ENCODE measurements at regions of chr13 and their contacts with region 1.

Region 1: DNA sequence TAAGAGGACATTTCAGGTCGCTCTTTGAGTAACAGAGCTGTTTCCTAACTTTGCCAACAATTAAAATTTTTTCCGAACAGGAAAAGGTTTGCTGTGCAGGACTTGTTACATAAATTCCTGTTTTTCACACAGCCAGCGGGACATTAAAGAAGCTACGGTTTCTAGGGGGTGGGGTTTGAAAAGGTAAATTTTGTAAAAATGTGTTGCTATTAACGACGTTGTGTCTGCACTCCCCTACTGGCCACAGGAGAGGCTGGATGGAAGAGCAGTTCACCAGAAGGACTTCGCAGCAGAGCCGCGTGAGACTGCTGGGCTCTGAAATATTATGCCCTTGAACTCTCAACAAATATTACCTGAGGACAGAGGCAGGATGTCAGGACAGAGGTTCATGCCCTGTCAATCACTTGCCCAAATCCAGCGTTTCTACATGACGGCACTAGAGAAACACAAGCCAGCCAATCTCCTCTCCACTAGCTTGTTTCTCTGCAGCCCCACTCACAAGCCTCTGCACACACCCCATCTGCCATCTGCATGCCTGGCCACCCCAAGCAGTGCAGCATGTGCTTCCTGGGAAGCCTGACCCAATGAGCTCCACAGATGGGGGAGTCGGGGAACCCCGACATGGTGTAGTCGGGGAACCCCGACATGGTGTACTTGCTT is 102.0 kb downstream of the FOXO1 start:
- DNase-seq: peak; percentile 96
- ATAC-seq: peak; percentile 78
- H3K4me3 ChIP-seq: peak overlapping the region; percentile 35 to 69 (median 44)
- H3K27ac ChIP-seq: peak overlapping the region; percentile 94
- H3K4me1 ChIP-seq: peaks cover 83% of the 10 kb centered on the region
- H3K27me3 ChIP-seq: no peaks in the 10 kb centered on the region
- CTCF ChIP-seq: peak; percentile 57
- EP300 ChIP-seq: peak in 1 of 2 experiments; percentile 75; a peak in 3 of 4 replicates
- POLR2A ChIP-seq: peak; percentile 40 to 59; a peak in 3 of 4 replicates
- RAD21 ChIP-seq: peak; percentile 54; the same call in 1 of the 2 replicates

Region 2: GRCh38 chr13:40069173-40070044 is 495.1 kb before region 1 on chr13:
- CTCF ChIA-PET with region 1: no interaction called
- POLR2A ChIA-PET with region 1: interaction called, 5 read pairs
- in situ Hi-C with region 1: no loop called
- intact Hi-C with region 1: loop called (anchors 2 kb)
- DNase-seq: peak; percentile 67
- ATAC-seq: peak; percentile 75
- H3K4me3 ChIP-seq: no peak overlapping the region
- H3K27ac ChIP-seq: no peak overlapping the region
- H3K4me1 ChIP-seq: peaks cover 69% of the 10 kb centered on the region
- H3K27me3 ChIP-seq: no peaks in the 10 kb centered on the region
- CTCF ChIP-seq: peak; percentile 85
- EP300 ChIP-seq: no peak
- POLR2A ChIP-seq: no peak
- RAD21 ChIP-seq: peak; percentile 60; the same call in 1 of the 2 replicates

Region 3: DNA sequence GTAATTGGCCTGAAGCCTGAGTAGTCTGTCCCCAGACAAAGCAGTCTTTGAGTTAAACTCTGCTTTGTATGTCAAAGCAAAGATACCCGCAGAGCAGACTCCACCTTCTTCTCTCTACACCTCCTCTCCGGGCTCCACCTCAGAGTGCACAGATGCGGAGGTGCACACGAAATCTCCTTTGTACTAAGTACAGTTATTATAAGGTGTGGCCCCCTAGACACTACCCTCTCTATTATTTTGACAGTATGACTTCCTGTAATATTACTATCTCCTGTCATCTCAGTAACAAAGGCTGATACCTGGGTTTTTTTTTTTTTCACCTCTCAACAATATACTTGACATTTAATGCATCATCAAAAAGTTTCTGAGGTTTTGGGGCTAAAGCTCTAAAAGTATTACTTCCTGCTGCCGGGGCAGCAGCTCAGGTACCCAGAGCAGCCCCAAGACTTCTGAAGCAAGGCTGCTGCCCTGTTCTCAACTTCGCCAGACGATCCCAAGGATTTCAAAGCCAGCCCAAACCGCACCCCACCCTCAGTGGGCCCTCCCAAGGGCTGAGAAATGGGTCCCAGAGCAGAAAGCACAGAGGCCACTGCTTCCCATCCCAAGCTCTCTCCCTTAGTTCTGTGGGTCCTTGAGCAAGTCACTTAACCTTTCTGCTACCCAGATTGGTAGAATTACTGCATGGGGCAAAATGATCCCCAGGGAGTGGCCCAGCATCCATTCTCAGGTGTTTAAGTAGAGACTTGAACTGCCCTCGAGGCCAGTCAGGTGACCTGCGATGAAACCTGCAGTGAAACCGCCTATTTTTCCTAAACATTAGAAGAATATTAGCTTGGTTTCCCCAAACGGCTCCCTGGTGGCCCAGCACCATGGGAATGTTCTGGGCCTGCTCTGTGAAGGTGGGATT is 78.6 kb before region 1 on chr13:
- CTCF ChIA-PET with region 1: no interaction called
- POLR2A ChIA-PET with region 1: no interaction called
- in situ Hi-C with region 1: no loop called
- intact Hi-C with region 1: loop called (anchors 2 kb)
- DNase-seq: no peak
- ATAC-seq: no peak
- H3K4me3 ChIP-seq: no peak overlapping the region
- H3K27ac ChIP-seq: no peak overlapping the region
- H3K4me1 ChIP-seq: peaks cover 54% of the 10 kb centered on the region
- H3K27me3 ChIP-seq: no peaks in the 10 kb centered on the region
- CTCF ChIP-seq: no peak
- EP300 ChIP-seq: no peak
- POLR2A ChIP-seq: no peak
- RAD21 ChIP-seq: no peak

Region 4: DNA sequence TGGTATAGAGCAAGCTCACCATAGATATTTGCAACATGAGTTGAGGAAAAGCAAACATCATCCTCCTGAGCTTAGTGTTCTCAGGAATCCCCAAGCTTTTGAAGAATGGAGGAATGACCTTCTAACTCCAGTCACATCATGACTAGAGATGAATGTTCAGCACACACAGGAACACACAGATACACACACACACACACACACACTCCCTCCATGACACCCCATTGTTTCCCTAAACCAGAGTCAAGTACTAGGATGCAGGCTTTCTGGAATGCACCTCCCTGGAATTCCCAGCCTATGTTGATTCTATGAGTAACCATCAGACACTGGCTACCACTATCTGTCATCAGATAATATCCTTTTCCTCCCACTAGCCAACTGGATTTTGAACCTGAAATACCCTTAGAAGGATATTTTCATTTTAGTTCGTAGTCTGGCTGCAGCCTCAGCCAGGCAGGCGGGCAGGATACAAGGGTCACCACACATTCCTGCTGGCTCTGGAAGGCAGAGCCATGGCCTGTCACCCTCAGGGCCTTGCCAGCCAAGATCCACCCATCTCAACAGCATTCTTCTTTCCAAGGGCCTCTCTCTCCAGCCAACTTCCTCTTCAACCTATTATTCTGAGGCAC is 60.4 kb before region 1 on chr13:
- CTCF ChIA-PET with region 1: no interaction called
- POLR2A ChIA-PET with region 1: interaction called, 5 read pairs
- in situ Hi-C with region 1: no loop called
- intact Hi-C with region 1: loop called (anchors 1 kb)
- DNase-seq: peak; percentile 99
- ATAC-seq: peak; percentile 96
- H3K4me3 ChIP-seq: peak overlapping the region in 1 of 3 experiments; percentile 45; a peak in 2 of 6 replicates
- H3K27ac ChIP-seq: peak overlapping the region; percentile 77
- H3K4me1 ChIP-seq: peaks cover 34% of the 10 kb centered on the region
- H3K27me3 ChIP-seq: no peaks in the 10 kb centered on the region
- CTCF ChIP-seq: no peak
- EP300 ChIP-seq: peak; percentile 74 to 79; a peak in 3 of 4 replicates
- POLR2A ChIP-seq: peak in 1 of 2 experiments; percentile 64; a peak in 1 of 4 replicates
- RAD21 ChIP-seq: peak; percentile 31; the same call in 1 of the 2 replicates

Region 5: DNA sequence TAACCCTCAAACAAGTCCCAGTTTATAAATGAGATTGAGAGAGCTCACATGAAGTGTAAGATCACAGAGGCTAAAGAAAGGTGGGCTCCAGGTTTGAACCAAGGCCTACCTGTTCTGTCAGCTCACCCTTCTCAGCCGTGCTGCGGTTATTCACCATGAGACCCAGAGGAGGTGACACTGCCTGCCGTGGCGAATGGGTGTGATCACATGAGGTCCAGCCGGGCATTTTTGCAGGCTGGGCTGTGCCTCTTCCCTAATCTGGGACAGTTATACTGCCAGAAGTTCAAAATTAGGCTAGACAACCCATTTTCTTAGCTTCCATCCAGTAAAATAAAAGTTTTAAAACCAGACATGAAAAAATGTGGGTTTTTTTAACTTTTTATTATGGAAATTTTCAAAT is 44.8 kb before region 1 on chr13:
- CTCF ChIA-PET with region 1: no interaction called
- POLR2A ChIA-PET with region 1: no interaction called
- in situ Hi-C with region 1: no loop called
- intact Hi-C with region 1: no loop called
- DNase-seq: no peak
- ATAC-seq: no peak
- H3K4me3 ChIP-seq: no peak overlapping the region
- H3K27ac ChIP-seq: no peak overlapping the region
- H3K4me1 ChIP-seq: peaks cover 31% of the 10 kb centered on the region
- H3K27me3 ChIP-seq: no peaks in the 10 kb centered on the region
- CTCF ChIP-seq: no peak
- EP300 ChIP-seq: no peak
- POLR2A ChIP-seq: no peak
- RAD21 ChIP-seq: no peak

Region 6: DNA sequence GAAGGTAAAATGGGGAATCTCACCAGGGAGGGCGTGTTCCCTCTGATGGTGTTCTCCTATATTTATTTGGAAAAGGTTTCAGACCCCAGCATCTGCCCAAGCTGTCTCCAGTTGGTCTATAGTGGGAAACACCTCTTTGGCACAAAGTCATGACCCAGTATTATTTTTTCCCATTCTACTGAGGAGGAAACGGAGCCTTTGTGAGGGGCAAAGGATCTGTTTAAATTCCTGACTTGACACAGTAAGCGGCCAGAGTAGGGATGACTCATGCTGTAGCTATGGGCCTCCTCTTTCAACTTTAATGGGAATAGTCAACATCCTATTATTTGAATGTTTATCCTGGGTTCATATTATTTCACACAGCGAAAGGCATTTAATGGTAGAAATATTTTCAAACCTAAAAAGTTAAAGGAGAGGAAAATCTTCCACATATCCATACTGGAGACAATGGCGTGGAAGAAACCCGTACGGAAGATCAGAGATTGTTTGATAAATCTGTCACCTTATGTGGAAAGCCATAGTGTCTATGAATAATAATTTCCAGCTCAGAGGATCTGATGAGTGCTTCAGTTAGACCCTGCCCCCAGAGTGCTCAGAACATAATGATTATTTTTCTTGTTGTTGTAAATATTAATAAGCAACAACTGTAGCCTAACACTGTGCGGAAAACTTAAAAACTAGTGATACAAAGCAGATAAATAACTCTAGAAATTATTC is 24.0 kb before region 1 on chr13:
- CTCF ChIA-PET with region 1: interaction called, 3 read pairs
- POLR2A ChIA-PET with region 1: interaction called, 17 read pairs
- in situ Hi-C with region 1: no loop called
- intact Hi-C with region 1: loop called (anchors 1 kb)
- DNase-seq: peak; percentile 96
- ATAC-seq: peak; percentile 83
- H3K4me3 ChIP-seq: peak overlapping the region in 2 of 3 experiments; percentile 35 to 47; a peak in 2 of 6 replicates
- H3K27ac ChIP-seq: peak overlapping the region; percentile 76
- H3K4me1 ChIP-seq: peaks cover 68% of the 10 kb centered on the region
- H3K27me3 ChIP-seq: no peaks in the 10 kb centered on the region
- CTCF ChIP-seq: no peak
- EP300 ChIP-seq: peak; percentile 61 to 90; a peak in 3 of 4 replicates
- POLR2A ChIP-seq: no peak
- RAD21 ChIP-seq: no peak

Region 7: GRCh38 chr13:40549500-40550094 is 14.9 kb before region 1 on chr13:
- CTCF ChIA-PET with region 1: no interaction called
- POLR2A ChIA-PET with region 1: interaction called, 10 read pairs
- in situ Hi-C with region 1: no loop called
- intact Hi-C with region 1: no loop called
- DNase-seq: peak; percentile 77
- ATAC-seq: peak; percentile 52
- H3K4me3 ChIP-seq: peak overlapping the region in 1 of 3 experiments; percentile 13; a peak in 1 of 6 replicates
- H3K27ac ChIP-seq: peak overlapping the region; percentile 32
- H3K4me1 ChIP-seq: peaks cover 89% of the 10 kb centered on the region
- H3K27me3 ChIP-seq: no peaks in the 10 kb centered on the region
- CTCF ChIP-seq: no peak
- EP300 ChIP-seq: no peak; a peak in 1 of 4 replicates
- POLR2A ChIP-seq: no peak
- RAD21 ChIP-seq: no peak

Region 8: DNA sequence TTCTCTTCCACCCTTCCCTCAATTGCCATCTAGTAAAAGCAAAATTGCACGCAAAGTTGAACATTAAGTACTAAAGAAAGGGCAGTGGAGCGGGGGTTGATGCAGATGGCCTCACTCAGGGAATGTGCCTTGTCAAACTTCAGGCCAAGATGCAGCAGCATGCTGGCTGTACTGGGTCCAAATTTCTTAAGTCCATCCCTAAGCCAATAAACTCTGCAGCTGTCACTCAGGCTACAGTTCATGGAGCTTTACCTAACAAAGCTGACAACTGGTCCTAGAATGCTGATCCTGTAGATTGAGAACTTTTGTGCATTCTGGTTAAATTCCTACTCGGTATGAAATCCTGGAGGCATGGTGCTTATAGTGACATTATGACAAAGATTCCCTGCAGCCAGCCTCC is 13.6 kb after region 1 on chr13:
- CTCF ChIA-PET with region 1: no interaction called
- POLR2A ChIA-PET with region 1: no interaction called
- in situ Hi-C with region 1: no loop called
- intact Hi-C with region 1: loop called (anchors 2 kb)
- DNase-seq: no peak
- ATAC-seq: peak; percentile 52
- H3K4me3 ChIP-seq: no peak overlapping the region
- H3K27ac ChIP-seq: no peak overlapping the region
- H3K4me1 ChIP-seq: peaks cover 82% of the 10 kb centered on the region
- H3K27me3 ChIP-seq: no peaks in the 10 kb centered on the region
- CTCF ChIP-seq: no peak
- EP300 ChIP-seq: no peak
- POLR2A ChIP-seq: no peak
- RAD21 ChIP-seq: no peak

Region 9: DNA sequence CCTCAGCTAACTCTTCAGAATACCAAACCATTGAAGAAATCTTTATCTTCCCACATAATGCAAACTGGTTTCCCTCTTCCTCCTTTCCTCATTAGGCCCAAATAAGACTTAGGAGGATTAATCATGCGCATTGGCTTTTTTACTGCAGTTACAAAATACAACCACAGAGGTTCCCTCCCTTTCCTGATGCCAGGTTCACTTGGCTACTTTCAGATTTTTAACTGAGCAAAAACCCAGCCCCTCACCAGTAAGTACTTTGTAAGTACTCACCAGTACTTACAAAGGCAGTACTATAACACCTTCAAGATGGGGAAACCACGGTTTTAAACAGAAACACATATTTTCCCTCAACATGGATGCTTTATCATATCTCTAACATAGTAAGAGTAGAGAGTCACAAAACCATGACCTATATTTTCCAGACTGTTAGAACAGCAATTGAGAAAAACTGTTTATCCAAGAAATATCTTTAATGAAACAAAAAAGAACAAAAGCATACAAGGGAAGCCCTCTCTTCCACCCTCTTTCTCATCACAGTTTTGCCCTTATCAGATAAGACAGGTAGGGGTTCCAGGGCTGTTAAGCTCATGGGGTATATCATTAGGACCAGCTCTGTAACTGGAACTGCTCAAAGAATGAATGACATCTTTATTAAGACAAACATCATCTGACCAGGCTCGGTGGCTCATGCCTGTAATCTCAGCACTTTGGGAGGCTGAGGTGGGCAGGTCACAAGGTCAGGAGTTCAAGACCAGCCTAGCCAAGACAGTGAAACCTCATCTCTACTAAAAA is 89.3 kb after region 1 on chr13:
- CTCF ChIA-PET with region 1: no interaction called
- POLR2A ChIA-PET with region 1: no interaction called
- in situ Hi-C with region 1: no loop called
- intact Hi-C with region 1: no loop called
- DNase-seq: no peak
- ATAC-seq: no peak
- H3K4me3 ChIP-seq: no peak overlapping the region
- H3K27ac ChIP-seq: no peak overlapping the region
- H3K4me1 ChIP-seq: peaks cover 56% of the 10 kb centered on the region
- H3K27me3 ChIP-seq: no peaks in the 10 kb centered on the region
- CTCF ChIP-seq: no peak
- EP300 ChIP-seq: no peak
- POLR2A ChIP-seq: no peak
- RAD21 ChIP-seq: no peak

Measured in HepG2 (cell line).